Spleen (tissue), 13 donors: ENCODE measurements at regions of chr6 and their contacts with region 1.

Region 1: GRCh38 chr6:87929843-87930288 is 117.8 kb upstream of the SPACA1 start:
- DNase-seq: peak; percentile 88
- H3K4me3 ChIP-seq: no peak overlapping the region
- H3K27ac ChIP-seq: no peak overlapping the region
- H3K4me1 ChIP-seq: peaks cover 0 to 31% (median 20%) of the 10 kb centered on the region in 6 donors
- H3K27me3 ChIP-seq: no peaks in the 10 kb centered on the region
- CTCF ChIP-seq: peak; percentile 69 to 91 (median 83)
- POLR2A ChIP-seq: no peak

Region 2: DNA sequence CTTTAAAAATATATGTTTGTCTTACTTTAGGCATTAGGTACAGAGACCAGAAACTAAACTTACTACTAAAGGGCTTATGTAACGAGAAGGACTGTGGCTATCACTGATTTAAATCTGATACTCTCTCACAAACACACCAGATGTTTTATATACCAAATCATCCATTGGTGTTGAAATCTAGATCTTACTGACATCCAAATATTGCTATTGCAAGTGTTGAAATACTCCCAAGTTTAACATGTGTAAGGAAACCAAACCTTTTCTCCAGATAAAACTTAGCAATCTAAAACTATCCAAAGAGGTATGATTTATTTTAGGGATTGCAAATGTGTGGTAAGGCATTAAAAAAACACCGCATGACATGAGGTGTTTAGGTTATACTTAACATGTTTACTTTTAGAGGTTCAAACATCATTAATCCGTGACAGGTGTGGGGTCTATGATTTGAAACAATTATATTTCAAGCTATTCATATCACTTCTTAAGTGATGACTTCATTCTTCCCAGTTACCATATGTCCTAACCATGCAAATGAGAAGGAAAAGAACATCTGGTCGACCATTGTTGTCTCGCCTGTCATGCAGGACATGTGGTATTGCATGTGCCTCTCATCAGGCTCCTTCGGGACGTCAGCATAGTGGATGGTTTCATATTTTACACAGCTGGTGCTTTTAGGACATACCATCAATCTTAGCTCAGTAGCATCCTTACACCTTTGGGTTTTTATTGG is 50.6 kb before region 1 on chr6:
- intact Hi-C with region 1: no loop called
- DNase-seq: no peak
- H3K4me3 ChIP-seq: no peak overlapping the region
- H3K27ac ChIP-seq: no peak overlapping the region
- H3K4me1 ChIP-seq: no peaks in the 10 kb centered on the region
- H3K27me3 ChIP-seq: peaks cover 0 to 4% (median 0%) of the 10 kb centered on the region in 7 donors
- CTCF ChIP-seq: no peak
- POLR2A ChIP-seq: no peak

Region 3: DNA sequence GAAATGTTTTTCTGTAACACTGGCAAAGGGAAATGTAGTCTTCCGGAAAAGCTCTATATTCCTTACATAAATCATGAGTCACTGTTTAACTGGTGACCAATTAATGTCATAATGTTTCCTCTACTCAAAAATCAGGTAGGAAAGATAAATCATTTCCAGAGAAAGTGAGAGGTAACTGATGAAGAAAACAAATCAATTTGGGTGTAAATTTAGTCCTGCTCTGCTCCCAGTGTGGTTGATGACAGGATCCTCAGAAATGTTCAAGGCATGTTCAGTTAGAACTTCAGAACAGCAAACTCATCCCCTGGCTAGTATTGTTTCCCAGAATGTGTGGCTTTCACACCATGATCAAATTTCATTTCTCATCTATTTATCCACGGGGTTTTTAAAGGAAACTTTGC is 79.0 kb after region 1 on chr6:
- intact Hi-C with region 1: no loop called
- DNase-seq: no peak
- H3K4me3 ChIP-seq: no peak overlapping the region
- H3K27ac ChIP-seq: no peak overlapping the region
- H3K4me1 ChIP-seq: peaks cover 0 to 12% (median 7%) of the 10 kb centered on the region in 6 donors
- H3K27me3 ChIP-seq: peaks cover 0 to 4% (median 0%) of the 10 kb centered on the region in 7 donors
- CTCF ChIP-seq: no peak
- POLR2A ChIP-seq: no peak

Region 4: GRCh38 chr6:88047510-88048150 is 117.8 kb after region 1 on chr6 and contains the start of gene SPACA1:
- intact Hi-C with region 1: no loop called
- DNase-seq: peak; percentile 58
- H3K4me3 ChIP-seq: no peak within 1 kb of the TSS
- H3K27ac ChIP-seq: no peak within 1 kb of the TSS
- H3K4me1 ChIP-seq: no peaks in the 10 kb centered on the region
- H3K27me3 ChIP-seq: peaks cover 0 to 11% (median 7%) of the 10 kb centered on the region in 7 donors
- CTCF ChIP-seq: no peak
- POLR2A ChIP-seq: no peak
- total RNA-seq, gene SPACA1: not detected

Region 5: DNA sequence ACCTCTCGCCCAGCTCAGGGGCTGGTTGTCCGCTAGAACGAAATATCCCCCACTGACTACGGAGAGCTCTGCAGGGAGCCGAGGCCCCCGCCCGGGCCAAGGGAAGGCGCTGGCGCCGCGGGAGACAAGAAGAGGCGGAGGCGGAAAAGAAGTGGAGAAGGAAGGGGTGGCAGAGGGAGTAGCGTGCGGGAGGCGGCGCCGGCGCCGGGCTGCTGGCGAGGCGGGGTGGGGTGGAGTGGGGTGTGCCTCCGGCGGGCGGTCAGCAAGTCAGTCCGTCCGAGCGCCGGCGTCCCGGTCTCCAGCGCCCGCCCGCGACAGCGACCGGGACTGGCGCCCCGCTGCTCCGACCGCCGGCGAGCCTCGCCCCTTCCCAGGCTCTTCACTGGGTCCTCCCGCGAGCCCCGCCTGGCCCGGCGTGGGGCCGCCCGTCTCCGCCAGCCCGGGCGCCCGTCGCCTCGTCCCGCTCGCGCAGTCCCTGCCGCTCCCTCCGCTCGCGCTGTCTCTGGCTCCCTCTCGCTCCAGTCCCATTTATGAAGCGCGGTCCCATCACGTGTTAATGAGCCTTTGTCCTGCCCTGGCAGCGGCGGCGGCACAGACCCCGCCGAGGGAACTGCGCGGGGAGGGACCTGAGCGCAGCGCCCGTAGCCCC is 236.1 kb after region 1 on chr6 and contains the start of gene CNR1:
- intact Hi-C with region 1: loop called (anchors 10 kb)
- DNase-seq: peak; percentile 87
- H3K4me3 ChIP-seq: peak within 1 kb of the TSS; percentile 38 to 79 (median 58)
- H3K27ac ChIP-seq: peak within 1 kb of the TSS in 7 of 8 donors; percentile 10 to 82 (median 67)
- H3K4me1 ChIP-seq: peaks cover 0 to 33% (median 25%) of the 10 kb centered on the region in 6 donors
- H3K27me3 ChIP-seq: peaks cover 0 to 88% (median 52%) of the 10 kb centered on the region in 7 donors
- CTCF ChIP-seq: peak in 1 of 11 experiments; percentile 28
- POLR2A ChIP-seq: no peak
- total RNA-seq, gene CNR1: 1.7 to 5.2 (median 2.6) TPM

Region 6: DNA sequence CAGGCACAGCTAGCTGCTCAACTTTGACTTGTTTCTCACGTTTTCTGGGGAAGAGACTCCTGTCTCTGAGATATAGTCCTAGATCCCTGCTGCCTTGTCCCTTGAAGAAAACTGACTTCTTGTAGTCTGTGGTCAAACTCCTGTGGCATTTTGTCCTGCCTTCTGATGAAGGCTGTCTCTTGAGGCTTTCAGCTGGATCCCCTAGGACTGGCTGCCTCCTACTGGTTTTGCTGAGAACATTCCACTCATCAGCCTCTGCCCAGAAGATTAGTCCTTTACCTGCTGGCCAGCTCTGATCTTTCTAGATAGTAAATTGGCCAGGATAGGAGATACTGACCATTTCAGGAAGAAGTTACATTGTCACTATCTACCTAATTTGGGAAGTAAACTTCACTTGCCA is 308.2 kb after region 1 on chr6:
- intact Hi-C with region 1: loop called (anchors 10 kb)
- DNase-seq: no peak
- H3K4me3 ChIP-seq: no peak overlapping the region
- H3K27ac ChIP-seq: no peak overlapping the region
- H3K4me1 ChIP-seq: no peaks in the 10 kb centered on the region
- H3K27me3 ChIP-seq: no peaks in the 10 kb centered on the region
- CTCF ChIP-seq: peak in 8 of 11 experiments; percentile 32 to 62 (median 56)
- POLR2A ChIP-seq: no peak

Region 7: GRCh38 chr6:88780714-88781389 is 851.0 kb after region 1 on chr6:
- intact Hi-C with region 1: loop called (anchors 10 kb)
- DNase-seq: no peak
- H3K4me3 ChIP-seq: no peak overlapping the region
- H3K27ac ChIP-seq: no peak overlapping the region
- H3K4me1 ChIP-seq: peaks cover 0 to 6% (median 0%) of the 10 kb centered on the region in 6 donors
- H3K27me3 ChIP-seq: no peaks in the 10 kb centered on the region
- CTCF ChIP-seq: peak in 10 of 11 experiments; percentile 58 to 87 (median 78)
- POLR2A ChIP-seq: no peak

Region 8: DNA sequence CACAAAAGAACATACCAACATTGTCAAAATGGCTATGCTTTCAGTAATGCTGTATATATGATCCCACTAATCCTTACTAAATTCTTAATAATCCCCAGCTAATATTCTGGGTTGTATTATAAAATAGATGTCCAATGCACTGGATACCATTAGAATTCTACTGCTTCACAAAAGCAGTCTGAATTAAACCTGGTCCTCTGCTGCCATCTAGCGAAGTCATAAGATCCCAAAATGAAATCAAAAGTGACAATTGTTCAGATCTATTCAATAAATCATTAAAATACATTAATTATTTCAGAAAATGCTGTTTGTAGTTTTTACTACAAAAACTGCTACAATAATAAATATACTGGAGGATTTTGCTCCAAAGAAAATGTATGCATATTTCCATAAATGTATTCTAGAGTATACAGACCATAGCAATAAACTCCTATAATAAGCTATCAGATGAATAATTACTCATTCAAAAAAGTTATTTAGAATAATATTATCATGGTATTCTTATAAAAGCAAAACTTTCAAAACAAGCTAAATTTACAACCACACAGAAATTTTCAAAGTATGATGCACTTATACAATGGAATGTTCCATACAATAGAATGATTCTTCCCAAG is 941.0 kb after region 1 on chr6:
- intact Hi-C with region 1: loop called (anchors 10 kb)
- DNase-seq: no peak
- H3K4me3 ChIP-seq: no peak overlapping the region
- H3K27ac ChIP-seq: no peak overlapping the region
- H3K4me1 ChIP-seq: peaks cover 0 to 38% (median 0%) of the 10 kb centered on the region in 6 donors
- H3K27me3 ChIP-seq: no peaks in the 10 kb centered on the region
- CTCF ChIP-seq: peak; percentile 11 to 70 (median 57)
- POLR2A ChIP-seq: no peak